ENCODE measurements at regions of chr12 and their contacts with region 1.

Region 1: GRCh38 chr12:57151741-57152630 is 4.6 kb upstream of the LRP1-AS start:
- DNase-seq: no peak
- H3K4me3 ChIP-seq: no peak overlapping the region
- H3K27ac ChIP-seq: no peak overlapping the region
- H3K4me1 ChIP-seq: peaks cover 0 to 4% (median 1%) of the 10 kb centered on the region in 4 experiments; a peak in 4 of 7 replicates
- H3K27me3 ChIP-seq: no peaks in the 10 kb centered on the region
- CTCF ChIP-seq: no peak
- EP300 ChIP-seq: no peak
- POLR2A ChIP-seq: no peak
- RAD21 ChIP-seq: no peak

Region 2: GRCh38 chr12:57135527-57136326 is 16.3 kb before region 1 on chr12:
- CTCF ChIA-PET with region 1: interaction called, 10 read pairs
- POLR2A ChIA-PET with region 1: interaction called, 62 read pairs
- DNase-seq: no peak
- H3K4me3 ChIP-seq: peak overlapping the region in 1 of 4 experiments; percentile 47; a peak in 4 of 8 replicates
- H3K27ac ChIP-seq: peak overlapping the region; percentile 78
- H3K4me1 ChIP-seq: peaks cover 22 to 53% (median 30%) of the 10 kb centered on the region in 4 experiments
- H3K27me3 ChIP-seq: no peaks in the 10 kb centered on the region
- CTCF ChIP-seq: no peak
- EP300 ChIP-seq: no peak
- POLR2A ChIP-seq: no peak; a peak in 1 of 3 replicates
- RAD21 ChIP-seq: no peak